Panc1 (cell line): ENCODE measurements at regions of chr3 and their contacts with region 1.

Region 1: GRCh38 chr3:85594676-85595075 is 635.9 kb downstream of the CADM2 start:
- DNase-seq: no peak
- ATAC-seq: no peak
- H3K4me3 ChIP-seq: no peak overlapping the region
- H3K27ac ChIP-seq: no peak overlapping the region
- H3K4me1 ChIP-seq: no peaks in the 10 kb centered on the region
- H3K27me3 ChIP-seq: no peaks in the 10 kb centered on the region
- CTCF ChIP-seq: no peak

Region 2: GRCh38 chr3:85007195-85008094 is 587.2 kb before region 1 on chr3:
- CTCF ChIA-PET with region 1: no interaction called
- POLR2A ChIA-PET with region 1: no interaction called
- in situ Hi-C with region 1: no loop called
- intact Hi-C with region 1: no loop called
- DNase-seq: no peak
- ATAC-seq: no peak
- H3K4me3 ChIP-seq: no peak overlapping the region
- H3K27ac ChIP-seq: no peak overlapping the region
- H3K4me1 ChIP-seq: no peaks in the 10 kb centered on the region
- H3K27me3 ChIP-seq: no peaks in the 10 kb centered on the region
- CTCF ChIP-seq: no peak

Region 3: GRCh38 chr3:85474241-85474640 is 120.4 kb before region 1 on chr3:
- CTCF ChIA-PET with region 1: no interaction called
- POLR2A ChIA-PET with region 1: no interaction called
- in situ Hi-C with region 1: no loop called
- intact Hi-C with region 1: no loop called
- DNase-seq: no peak
- ATAC-seq: no peak
- H3K4me3 ChIP-seq: no peak overlapping the region
- H3K27ac ChIP-seq: no peak overlapping the region
- H3K4me1 ChIP-seq: no peaks in the 10 kb centered on the region
- H3K27me3 ChIP-seq: no peaks in the 10 kb centered on the region
- CTCF ChIP-seq: no peak

Region 4: GRCh38 chr3:85790445-85791030 is 195.9 kb after region 1 on chr3:
- CTCF ChIA-PET with region 1: no interaction called
- POLR2A ChIA-PET with region 1: no interaction called
- in situ Hi-C with region 1: no loop called
- intact Hi-C with region 1: loop called (anchors 10 kb)
- DNase-seq: no peak
- ATAC-seq: no peak
- H3K4me3 ChIP-seq: no peak overlapping the region
- H3K27ac ChIP-seq: no peak overlapping the region
- H3K4me1 ChIP-seq: no peaks in the 10 kb centered on the region
- H3K27me3 ChIP-seq: no peaks in the 10 kb centered on the region
- CTCF ChIP-seq: no peak